Right cardiac atrium (tissue), 5 donors: ENCODE measurements at regions of chr5 and their contacts with region 1.

Region 1: GRCh38 chr5:153964880-153965645 is 73.6 kb downstream of the FAM114A2 start:
- DNase-seq: peak in 1 of 3 donors; percentile 52
- ATAC-seq: peak; percentile 68 to 72
- H3K4me3 ChIP-seq: no peak overlapping the region
- H3K27ac ChIP-seq: no peak overlapping the region
- H3K4me1 ChIP-seq: no peaks in the 10 kb centered on the region
- H3K27me3 ChIP-seq: no peaks in the 10 kb centered on the region

Region 2: DNA sequence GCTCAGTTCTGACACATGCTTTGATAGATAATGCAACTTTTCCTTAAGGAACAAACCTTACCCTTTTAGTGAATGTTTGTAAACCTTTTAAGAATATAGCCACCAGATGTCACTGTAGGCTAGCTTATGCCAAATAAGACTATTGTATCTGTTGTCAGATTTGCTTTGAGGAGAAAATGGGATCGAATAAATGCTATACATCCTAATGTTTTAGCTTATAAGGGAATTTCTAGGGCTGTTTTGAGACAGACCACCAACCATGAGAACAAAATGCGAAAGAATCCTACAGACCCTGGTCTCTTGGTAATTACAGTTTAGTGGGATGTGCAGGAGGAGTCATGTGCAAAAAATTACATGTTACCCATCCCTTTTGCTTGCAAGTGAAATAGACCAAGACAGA is 1432.3 kb before region 1 on chr5:
- intact Hi-C with region 1: loop called (anchors 2 to 10 kb)
- DNase-seq: no peak
- ATAC-seq: peak in 1 of 2 donors; percentile 39
- H3K4me3 ChIP-seq: no peak overlapping the region
- H3K27ac ChIP-seq: no peak overlapping the region
- H3K4me1 ChIP-seq: peaks cover 1% of the 10 kb centered on the region
- H3K27me3 ChIP-seq: no peaks in the 10 kb centered on the region

Region 3: DNA sequence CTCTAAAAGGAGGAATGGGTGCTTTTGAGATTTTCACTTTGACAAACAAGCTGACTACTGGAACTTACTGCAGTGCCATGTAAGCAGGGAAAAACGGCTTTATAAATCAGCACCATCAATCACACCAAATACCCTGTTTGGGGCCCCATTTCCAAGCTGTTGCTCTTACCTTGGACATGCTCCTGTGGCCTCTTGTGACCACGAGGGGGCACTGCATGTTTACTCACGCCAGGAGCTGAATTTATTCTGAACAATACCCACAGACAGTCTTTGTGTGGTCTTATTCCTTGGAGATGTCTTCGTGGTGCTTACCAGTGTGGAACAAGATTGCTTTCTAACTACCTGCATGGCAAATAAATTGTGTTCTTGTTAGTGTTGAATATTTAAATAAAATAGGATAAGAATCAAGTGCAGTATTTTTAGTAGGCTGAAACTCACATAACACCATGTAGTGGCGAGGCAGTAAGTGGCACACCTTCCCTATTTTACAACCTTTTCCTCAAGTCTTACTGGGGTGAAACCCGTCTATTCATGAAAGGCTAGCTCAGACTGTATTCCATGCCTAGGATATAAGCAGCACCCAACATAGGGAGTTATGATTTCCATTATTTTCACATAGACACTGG is 1404.4 kb before region 1 on chr5:
- intact Hi-C with region 1: loop called in 1 of 4 experiments (anchors 10 kb)
- DNase-seq: peak; percentile 52 to 81 (median 74)
- ATAC-seq: peak; percentile 26 to 51
- H3K4me3 ChIP-seq: no peak overlapping the region
- H3K27ac ChIP-seq: no peak overlapping the region
- H3K4me1 ChIP-seq: no peaks in the 10 kb centered on the region
- H3K27me3 ChIP-seq: no peaks in the 10 kb centered on the region

Region 4: GRCh38 chr5:153490118-153491037 is 474.7 kb before region 1 on chr5 and contains the start of gene GRIA1:
- intact Hi-C with region 1: loop called in 3 of 4 experiments (anchors 5 to 10 kb)
- DNase-seq: no peak
- ATAC-seq: no peak
- H3K4me3 ChIP-seq: peak within 1 kb of the TSS; percentile 40
- H3K27ac ChIP-seq: no peak within 1 kb of the TSS
- H3K4me1 ChIP-seq: no peaks in the 10 kb centered on the region
- H3K27me3 ChIP-seq: no peaks in the 10 kb centered on the region
- total RNA-seq, gene GRIA1: 0.42 to 1.2 (median 0.44) TPM

Region 5: DNA sequence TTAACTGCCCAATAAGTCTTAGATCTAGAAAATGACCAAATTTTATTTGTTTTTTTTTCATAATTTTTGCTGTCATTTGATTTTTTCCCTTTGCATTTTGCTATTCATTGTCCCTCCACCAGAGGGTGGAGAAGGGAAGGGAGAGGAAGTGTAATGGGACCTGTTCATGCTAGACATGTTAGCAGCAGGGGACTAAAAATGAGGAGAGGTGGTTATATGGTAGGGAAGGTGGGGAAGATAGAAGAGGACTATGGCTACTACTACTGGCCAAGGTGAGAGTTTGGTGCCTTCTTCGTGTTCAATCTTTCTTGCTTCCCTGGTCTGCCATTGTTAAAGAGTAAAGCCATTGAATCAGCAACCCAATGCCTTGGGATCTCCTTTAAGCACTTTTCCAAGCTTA is 468.2 kb before region 1 on chr5:
- intact Hi-C with region 1: loop called in 3 of 4 experiments (anchors 5 to 10 kb)
- DNase-seq: no peak
- ATAC-seq: no peak
- H3K4me3 ChIP-seq: no peak overlapping the region
- H3K27ac ChIP-seq: no peak overlapping the region
- H3K4me1 ChIP-seq: no peaks in the 10 kb centered on the region
- H3K27me3 ChIP-seq: no peaks in the 10 kb centered on the region